ENCODE measurements at regions of chr9 and their contacts with region 1.

Region 1: DNA sequence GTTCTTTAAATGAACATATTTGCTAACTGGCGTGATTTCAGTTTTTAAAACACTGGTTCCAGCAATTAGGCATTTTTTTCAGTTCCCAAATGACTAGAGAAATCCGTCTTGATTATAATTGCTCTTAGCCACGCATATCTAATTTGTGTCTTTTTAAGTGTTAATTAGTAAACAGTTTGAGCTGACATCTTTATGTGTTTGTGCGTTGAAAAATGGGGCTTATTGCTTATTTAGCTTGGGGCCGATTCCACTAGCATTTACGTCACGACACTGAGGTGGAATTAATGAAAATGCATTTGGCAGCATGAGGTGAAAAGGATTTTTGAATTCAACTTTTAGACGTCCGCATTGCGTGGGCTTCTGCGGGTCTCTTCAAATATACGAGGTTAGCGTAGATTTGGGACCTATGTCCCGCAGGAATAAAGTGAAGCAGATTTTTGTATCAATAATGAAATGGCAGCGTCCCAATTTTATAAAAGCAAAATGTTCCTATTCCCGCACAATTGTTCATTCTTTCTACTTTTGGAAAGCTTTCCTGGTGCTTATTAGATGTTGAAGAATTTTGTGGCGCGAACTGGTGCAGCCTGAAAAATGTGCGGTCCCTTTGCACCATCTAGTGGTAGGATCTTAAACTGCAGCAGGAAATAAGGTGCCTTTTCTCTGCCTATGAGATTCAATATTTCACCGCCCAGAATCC is 122.7 kb upstream of the LMX1B start:
- DNase-seq: peak in 7 of 9 experiments; percentile 41 to 82 (median 68)
- ATAC-seq: peak; percentile 74
- H3K4me3 ChIP-seq: no peak overlapping the region
- H3K4me3 Mint-ChIP-seq: no peak overlapping the region
- H3K27ac ChIP-seq: no peak overlapping the region
- H3K27ac Mint-ChIP-seq: no peak overlapping the region
- H3K4me1 ChIP-seq: peaks cover 16% of the 10 kb centered on the region
- H3K4me1 Mint-ChIP-seq: peaks cover 16% of the 10 kb centered on the region
- H3K27me3 ChIP-seq: no peaks in the 10 kb centered on the region
- H3K27me3 Mint-ChIP-seq: no peaks in the 10 kb centered on the region
- CTCF ChIP-seq: peak; percentile 88

Region 2: GRCh38 chr9:125785248-125785751 is 705.7 kb before region 1 on chr9:
- CTCF ChIA-PET with region 1: no interaction called
- POLR2A ChIA-PET with region 1: no interaction called
- intact Hi-C with region 1: no loop called
- DNase-seq: peak in 3 of 9 experiments; percentile 11 to 33 (median 24)
- ATAC-seq: no peak
- H3K4me3 ChIP-seq: no peak overlapping the region
- H3K4me3 Mint-ChIP-seq: peak overlapping the region; percentile 10
- H3K27ac ChIP-seq: no peak overlapping the region
- H3K27ac Mint-ChIP-seq: peak overlapping the region; percentile 81
- H3K4me1 ChIP-seq: peaks cover 16% of the 10 kb centered on the region
- H3K4me1 Mint-ChIP-seq: peaks cover 31% of the 10 kb centered on the region
- H3K27me3 ChIP-seq: no peaks in the 10 kb centered on the region
- H3K27me3 Mint-ChIP-seq: no peaks in the 10 kb centered on the region
- CTCF ChIP-seq: no peak

Region 3: GRCh38 chr9:126228781-126229444 is 262.1 kb before region 1 on chr9:
- CTCF ChIA-PET with region 1: interaction called, 6 read pairs
- POLR2A ChIA-PET with region 1: no interaction called
- intact Hi-C with region 1: loop called (anchors 1 kb)
- DNase-seq: peak; percentile 33 to 79 (median 63)
- ATAC-seq: peak; percentile 91
- H3K4me3 ChIP-seq: no peak overlapping the region
- H3K4me3 Mint-ChIP-seq: no peak overlapping the region
- H3K27ac ChIP-seq: no peak overlapping the region
- H3K27ac Mint-ChIP-seq: no peak overlapping the region
- H3K4me1 ChIP-seq: no peaks in the 10 kb centered on the region
- H3K4me1 Mint-ChIP-seq: peaks cover 2% of the 10 kb centered on the region
- H3K27me3 ChIP-seq: peaks cover 0 to 3% of the 10 kb centered on the region in 2 experiments
- H3K27me3 Mint-ChIP-seq: peaks cover 38% of the 10 kb centered on the region
- CTCF ChIP-seq: peak; percentile 89

Region 4: DNA sequence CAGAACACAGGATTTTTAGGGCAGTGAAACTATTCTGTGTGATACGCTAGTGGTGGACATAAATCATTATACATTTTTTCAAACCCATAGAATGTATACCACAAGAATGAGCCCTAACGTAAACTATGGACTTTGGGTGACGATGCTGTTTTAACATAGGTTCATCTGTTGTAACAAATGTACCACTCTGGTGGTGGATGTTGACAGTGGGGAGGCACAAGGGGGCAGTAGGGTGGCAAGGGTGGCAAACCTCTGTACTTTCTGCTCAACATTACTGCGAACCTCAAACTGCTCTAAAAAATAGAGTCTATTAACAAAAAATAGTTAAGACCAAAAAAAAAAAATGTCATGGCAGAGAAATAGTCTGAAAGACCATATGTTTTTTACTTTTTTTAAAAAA is 173.5 kb before region 1 on chr9:
- CTCF ChIA-PET with region 1: interaction called, 179 read pairs
- POLR2A ChIA-PET with region 1: interaction called, 3 read pairs
- intact Hi-C with region 1: loop called (anchors 1 kb)
- DNase-seq: peak; percentile 30 to 78 (median 62)
- ATAC-seq: peak; percentile 92
- H3K4me3 ChIP-seq: no peak overlapping the region
- H3K4me3 Mint-ChIP-seq: no peak overlapping the region
- H3K27ac ChIP-seq: no peak overlapping the region
- H3K27ac Mint-ChIP-seq: no peak overlapping the region
- H3K4me1 ChIP-seq: peaks cover 3% of the 10 kb centered on the region
- H3K4me1 Mint-ChIP-seq: peaks cover 14% of the 10 kb centered on the region
- H3K27me3 ChIP-seq: no peaks in the 10 kb centered on the region
- H3K27me3 Mint-ChIP-seq: no peaks in the 10 kb centered on the region
- CTCF ChIP-seq: peak; percentile 71

Region 5: GRCh38 chr9:126398403-126399058 is 92.5 kb before region 1 on chr9:
- CTCF ChIA-PET with region 1: interaction called, 101 read pairs
- POLR2A ChIA-PET with region 1: interaction called, 3 read pairs
- intact Hi-C with region 1: loop called (anchors 1 kb)
- DNase-seq: peak; percentile 57 to 88 (median 77)
- ATAC-seq: no peak
- H3K4me3 ChIP-seq: peak overlapping the region in 1 of 2 experiments; percentile 29
- H3K4me3 Mint-ChIP-seq: peak overlapping the region; percentile 69
- H3K27ac ChIP-seq: peak overlapping the region; percentile 38 to 64
- H3K27ac Mint-ChIP-seq: peak overlapping the region; percentile 86
- H3K4me1 ChIP-seq: peaks cover 44% of the 10 kb centered on the region
- H3K4me1 Mint-ChIP-seq: peaks cover 54% of the 10 kb centered on the region
- H3K27me3 ChIP-seq: no peaks in the 10 kb centered on the region
- H3K27me3 Mint-ChIP-seq: no peaks in the 10 kb centered on the region
- CTCF ChIP-seq: peak; percentile 99

Region 6: DNA sequence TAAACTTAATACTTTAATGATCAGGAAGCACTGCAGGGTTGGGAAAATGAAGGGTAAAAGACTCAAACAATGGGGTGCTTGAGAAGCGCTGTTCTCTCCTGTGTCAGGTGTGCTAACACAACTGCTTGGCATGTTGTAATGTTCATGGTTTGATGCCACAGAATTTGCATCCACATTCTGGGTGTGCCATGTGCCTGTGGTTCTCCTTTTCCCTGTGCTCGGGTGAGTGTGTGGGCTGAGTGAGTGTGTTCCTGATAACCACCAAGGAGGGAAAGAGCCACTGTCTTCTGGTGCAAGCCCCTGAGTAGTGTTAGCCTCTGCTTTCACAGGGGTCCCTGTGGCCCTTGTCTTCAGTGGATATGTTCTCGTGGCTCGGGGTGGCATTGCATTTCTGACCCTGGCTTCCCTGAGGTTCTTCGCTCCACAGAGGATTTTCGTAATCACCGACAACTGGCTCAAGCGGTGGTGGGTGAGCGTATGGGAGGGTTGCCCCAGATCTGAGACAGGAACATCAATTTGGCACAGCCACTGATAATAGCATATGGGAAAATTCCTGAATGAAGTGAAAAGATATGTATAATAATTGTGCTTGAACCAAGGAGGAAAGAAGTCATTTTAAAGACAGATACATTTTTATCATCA is 62.4 kb before region 1 on chr9:
- CTCF ChIA-PET with region 1: interaction called, 13 read pairs
- POLR2A ChIA-PET with region 1: no interaction called
- intact Hi-C with region 1: no loop called
- DNase-seq: no peak
- ATAC-seq: no peak
- H3K4me3 ChIP-seq: no peak overlapping the region
- H3K4me3 Mint-ChIP-seq: no peak overlapping the region
- H3K27ac ChIP-seq: no peak overlapping the region
- H3K27ac Mint-ChIP-seq: no peak overlapping the region
- H3K4me1 ChIP-seq: peaks cover 6% of the 10 kb centered on the region
- H3K4me1 Mint-ChIP-seq: peaks cover 20% of the 10 kb centered on the region
- H3K27me3 ChIP-seq: no peaks in the 10 kb centered on the region
- H3K27me3 Mint-ChIP-seq: no peaks in the 10 kb centered on the region
- CTCF ChIP-seq: no peak

Region 7: GRCh38 chr9:126471084-126471624 is 19.9 kb before region 1 on chr9:
- CTCF ChIA-PET with region 1: interaction called, 34 read pairs
- POLR2A ChIA-PET with region 1: interaction called, 6 read pairs
- intact Hi-C with region 1: loop called in 1 of 2 experiments (anchors 2 kb)
- DNase-seq: peak; percentile 56 to 93 (median 78)
- ATAC-seq: peak; percentile 73
- H3K4me3 ChIP-seq: peak overlapping the region; percentile 18 to 40
- H3K4me3 Mint-ChIP-seq: peak overlapping the region; percentile 71
- H3K27ac ChIP-seq: peak overlapping the region; percentile 46 to 63
- H3K27ac Mint-ChIP-seq: peak overlapping the region; percentile 94
- H3K4me1 ChIP-seq: peaks cover 59% of the 10 kb centered on the region
- H3K4me1 Mint-ChIP-seq: peaks cover 94% of the 10 kb centered on the region
- H3K27me3 ChIP-seq: no peaks in the 10 kb centered on the region
- H3K27me3 Mint-ChIP-seq: no peaks in the 10 kb centered on the region
- CTCF ChIP-seq: no peak

Measured in CD8-positive, alpha-beta T cell (primary cell).